Activated naive CD4-positive, alpha-beta T cell treated with anti-CD3 and anti-CD28 coated beads, Interleukin-2, amount 10 ng/mL, durations not matched to agents 7 days and 5 days (primary cell): ENCODE measurements at regions of chr2 and their contacts with region 1.

Region 1: DNA sequence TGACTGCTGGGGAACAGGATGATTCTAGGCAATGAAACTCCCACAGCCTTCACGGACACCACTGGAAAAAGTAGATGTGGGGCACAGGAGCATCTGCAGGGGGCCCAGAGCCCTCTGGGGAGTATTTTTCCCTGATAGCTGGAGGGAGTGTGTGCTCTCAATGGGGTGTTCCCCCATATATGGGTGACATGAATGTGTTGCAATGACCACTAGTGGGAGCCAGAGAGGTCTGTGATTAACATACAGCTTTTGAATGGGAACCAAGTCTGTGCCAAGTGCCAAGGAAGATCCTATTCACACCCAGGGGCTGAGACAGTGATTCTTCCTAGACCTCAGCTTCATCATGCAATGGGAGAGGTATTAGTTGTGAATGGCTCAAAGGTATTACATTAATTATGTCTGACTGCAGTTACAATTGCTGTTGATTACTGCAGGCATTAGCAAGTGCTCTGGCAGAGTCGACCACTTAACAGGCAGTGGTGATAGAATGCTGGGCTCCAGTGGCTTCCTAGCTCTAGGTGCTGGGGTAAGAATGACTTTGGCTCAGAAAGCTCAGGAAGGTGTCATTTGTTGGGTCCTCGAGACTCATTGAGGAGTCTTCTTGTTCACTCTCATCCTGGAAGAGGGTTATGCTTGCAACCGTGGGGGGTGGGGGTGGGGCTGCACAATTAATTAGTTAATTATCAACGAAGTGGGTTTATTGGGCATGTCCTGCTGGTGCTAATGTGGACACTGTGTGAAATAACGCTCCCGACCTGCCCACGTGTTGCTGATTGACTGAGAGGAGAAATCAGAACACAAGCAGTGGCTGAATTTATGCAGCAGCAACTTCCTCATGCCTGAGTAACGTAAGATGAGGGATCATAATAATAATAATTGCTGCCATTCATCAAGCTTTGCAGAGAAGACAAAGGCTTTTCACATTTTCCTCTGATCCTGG is 194.1 kb downstream of the CLIP4 start:
- DNase-seq: peak; percentile 62
- H3K4me3 Mint-ChIP-seq: no peak overlapping the region
- H3K27ac Mint-ChIP-seq: no peak overlapping the region
- H3K4me1 Mint-ChIP-seq: peaks cover 9% of the 10 kb centered on the region
- H3K27me3 Mint-ChIP-seq: peaks cover 46% of the 10 kb centered on the region

Region 2: GRCh38 chr2:28870146-28870891 is 439.0 kb before region 1 on chr2 and contains the start of gene TRMT61B:
- CTCF ChIA-PET with region 1: no interaction called
- DNase-seq: peak; percentile 98
- H3K4me3 Mint-ChIP-seq: peak within 1 kb of the TSS; percentile 95
- H3K27ac Mint-ChIP-seq: peak within 1 kb of the TSS; percentile 98
- H3K4me1 Mint-ChIP-seq: peaks cover 31% of the 10 kb centered on the region
- H3K27me3 Mint-ChIP-seq: peaks cover 22% of the 10 kb centered on the region

Region 3: DNA sequence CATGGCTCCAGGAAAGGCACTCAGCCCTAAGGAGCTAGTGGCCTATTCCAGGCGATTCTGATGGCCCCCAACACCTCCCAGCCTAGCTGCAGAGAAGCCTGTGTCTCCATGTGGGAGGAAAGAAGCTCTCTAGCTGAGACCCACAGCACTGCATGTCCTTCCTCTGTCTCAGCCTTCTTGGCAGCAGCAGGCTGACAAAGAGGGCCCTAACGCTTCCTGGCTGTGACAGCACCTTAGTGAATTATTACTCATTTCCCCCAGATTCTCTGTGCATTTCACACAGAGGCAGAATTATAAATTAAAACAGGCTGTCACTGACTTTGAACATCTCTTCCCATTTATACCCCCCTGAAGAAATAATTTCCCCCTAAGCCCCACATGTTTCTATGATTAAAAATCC is 12.7 kb after region 1 on chr2:
- CTCF ChIA-PET with region 1: interaction called, 13 read pairs
- DNase-seq: no peak
- H3K4me3 Mint-ChIP-seq: no peak overlapping the region
- H3K27ac Mint-ChIP-seq: no peak overlapping the region
- H3K4me1 Mint-ChIP-seq: peaks cover 12% of the 10 kb centered on the region
- H3K27me3 Mint-ChIP-seq: peaks cover 42% of the 10 kb centered on the region